ENCODE measurements at regions of chr14 and their contacts with region 1.

Region 1: DNA sequence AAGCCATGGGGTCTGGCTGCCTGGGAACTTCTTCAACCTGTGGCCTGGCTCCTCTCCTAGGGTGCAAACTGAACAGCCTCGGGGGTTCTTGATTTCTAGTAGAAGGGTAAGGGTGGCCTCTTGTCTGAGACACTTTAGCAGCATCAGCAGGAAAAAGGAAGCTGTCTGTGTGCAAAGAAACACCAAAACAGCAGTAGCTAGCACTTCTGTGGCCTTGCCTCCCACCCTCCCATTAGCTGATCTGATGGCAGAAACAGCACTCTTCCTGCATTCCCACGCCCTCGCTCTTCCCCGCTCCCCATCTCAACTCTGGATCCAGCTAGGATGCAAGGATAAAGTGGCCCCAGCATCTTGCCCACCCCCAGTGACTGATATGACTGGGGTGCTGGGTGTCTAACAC is 20.7 kb downstream of the SLC7A8 start:
- DNase-seq: no peak
- ATAC-seq: no peak
- H3K4me3 ChIP-seq: no peak overlapping the region
- H3K4me3 Mint-ChIP-seq: peak overlapping the region in 5 of 10 donors; percentile 29 to 86 (median 62)
- H3K27ac ChIP-seq: no peak overlapping the region
- H3K27ac Mint-ChIP-seq: peak overlapping the region in 7 of 9 donors; percentile 18 to 94 (median 76)
- H3K4me1 ChIP-seq: peaks cover 0 to 19% of the 10 kb centered on the region in 2 donors
- H3K4me1 Mint-ChIP-seq: peaks cover 3 to 46% (median 23%) of the 10 kb centered on the region in 7 donors
- H3K27me3 ChIP-seq: no peaks in the 10 kb centered on the region
- H3K27me3 Mint-ChIP-seq: peaks cover 0 to 15% (median 0%) of the 10 kb centered on the region in 5 donors

Region 2: GRCh38 chr14:23174276-23175184 is 11.7 kb after region 1 on chr14:
- CTCF ChIA-PET with region 1: interaction called, 4 read pairs
- POLR2A ChIA-PET with region 1: interaction called, 13 read pairs
- intact Hi-C with region 1: no loop called
- DNase-seq: no peak
- ATAC-seq: no peak
- H3K4me3 ChIP-seq: no peak overlapping the region
- H3K4me3 Mint-ChIP-seq: peak overlapping the region in 1 of 10 donors; percentile 6
- H3K27ac ChIP-seq: no peak overlapping the region
- H3K27ac Mint-ChIP-seq: peak overlapping the region in 1 of 9 donors; percentile 9
- H3K4me1 ChIP-seq: peaks cover 0 to 12% of the 10 kb centered on the region in 2 donors
- H3K4me1 Mint-ChIP-seq: peaks cover 2 to 81% (median 39%) of the 10 kb centered on the region in 7 donors
- H3K27me3 ChIP-seq: no peaks in the 10 kb centered on the region
- H3K27me3 Mint-ChIP-seq: peaks cover 0 to 35% (median 6%) of the 10 kb centered on the region in 5 donors

Region 3: GRCh38 chr14:23228812-23229211 is 66.0 kb after region 1 on chr14:
- CTCF ChIA-PET with region 1: no interaction called
- POLR2A ChIA-PET with region 1: no interaction called
- intact Hi-C with region 1: no loop called
- DNase-seq: no peak
- ATAC-seq: no peak
- H3K4me3 ChIP-seq: no peak overlapping the region
- H3K4me3 Mint-ChIP-seq: no peak overlapping the region
- H3K27ac ChIP-seq: no peak overlapping the region
- H3K27ac Mint-ChIP-seq: no peak overlapping the region
- H3K4me1 ChIP-seq: no peaks in the 10 kb centered on the region
- H3K4me1 Mint-ChIP-seq: no peaks in the 10 kb centered on the region
- H3K27me3 ChIP-seq: no peaks in the 10 kb centered on the region
- H3K27me3 Mint-ChIP-seq: peaks cover 0 to 20% (median 9%) of the 10 kb centered on the region in 5 donors

Measured in naive thymus-derived CD4-positive, alpha-beta T cell (primary cell).